Ascending aorta (tissue), 2 donors: ENCODE measurements at regions of chr10 and their contacts with region 1.

Region 1: GRCh38 chr10:32938554-32939061 is 19.4 kb downstream of the ITGB1 start:
- DNase-seq: no peak
- H3K4me3 ChIP-seq: peak overlapping the region; percentile 18 to 29
- H3K27ac ChIP-seq: peak overlapping the region; percentile 73 to 79
- H3K4me1 ChIP-seq: peaks cover 24 to 57% of the 10 kb centered on the region in 2 donors
- H3K27me3 ChIP-seq: no peaks in the 10 kb centered on the region
- CTCF ChIP-seq: no peak

Region 2: GRCh38 chr10:31782701-31783100 is 1155.9 kb before region 1 on chr10:
- intact Hi-C with region 1: no loop called
- DNase-seq: no peak
- H3K4me3 ChIP-seq: no peak overlapping the region
- H3K27ac ChIP-seq: no peak overlapping the region
- H3K4me1 ChIP-seq: no peaks in the 10 kb centered on the region
- H3K27me3 ChIP-seq: no peaks in the 10 kb centered on the region
- CTCF ChIP-seq: no peak

Region 3: GRCh38 chr10:32901815-32902214 is 36.8 kb before region 1 on chr10:
- intact Hi-C with region 1: loop called (anchors 5 kb)
- DNase-seq: no peak
- H3K4me3 ChIP-seq: no peak overlapping the region
- H3K27ac ChIP-seq: no peak overlapping the region
- H3K4me1 ChIP-seq: no peaks in the 10 kb centered on the region
- H3K27me3 ChIP-seq: no peaks in the 10 kb centered on the region
- CTCF ChIP-seq: no peak